ENCODE measurements at regions of chr1 and their contacts with region 1.

Region 1: GRCh38 chr1:153796791-153797659 is 21.8 kb downstream of the SLC27A3 start:
- DNase-seq: no peak
- ATAC-seq: peak; percentile 66

Region 2: DNA sequence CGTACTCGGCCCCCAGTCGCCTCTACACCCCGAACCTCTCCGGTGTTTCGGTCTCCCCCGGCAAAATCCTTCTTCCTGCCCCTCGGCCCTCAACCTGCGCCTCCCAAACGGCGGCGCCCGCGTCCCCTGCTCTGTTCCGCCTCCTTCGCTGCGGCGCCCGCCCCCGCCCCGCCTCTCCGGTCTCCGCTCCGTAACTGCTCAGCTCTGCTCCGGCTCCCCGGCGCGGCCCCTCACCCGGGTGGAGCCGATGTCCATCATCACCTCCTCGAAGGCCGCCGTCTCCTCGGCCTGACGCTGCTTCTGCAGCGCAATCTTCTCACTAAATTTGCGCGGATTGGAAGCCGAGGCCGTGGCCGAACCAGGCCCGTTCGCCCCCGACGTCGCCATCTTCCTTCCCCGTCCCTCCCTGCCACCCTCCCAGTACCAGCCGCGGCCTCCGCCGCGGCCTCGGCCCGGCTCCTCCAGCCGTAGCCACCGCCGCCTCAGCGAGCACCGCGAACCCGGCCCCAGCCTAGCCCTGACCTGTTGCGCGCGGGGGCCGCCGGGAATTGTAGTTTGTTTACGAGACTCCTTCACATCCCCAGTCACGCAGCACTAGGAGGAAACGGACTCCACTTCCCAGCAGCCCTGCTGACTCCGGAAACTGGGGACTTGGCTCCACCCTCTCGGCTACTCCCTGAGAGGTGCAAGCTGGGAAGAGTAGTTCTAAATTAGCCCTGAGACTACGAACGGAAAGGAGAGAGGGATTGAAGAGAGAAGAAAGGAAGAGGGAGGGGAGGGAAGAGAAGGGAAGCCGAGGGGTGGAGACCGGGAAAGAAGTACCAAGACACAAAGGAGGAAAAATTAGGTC is 161.3 kb after region 1 on chr1 and contains the start of gene CRTC2:
- intact Hi-C with region 1: loop called (anchors 5 kb)
- DNase-seq: peak; percentile 100
- ATAC-seq: peak; percentile 91
- total RNA-seq, gene CRTC2: 19.3 TPM